ENCODE measurements at regions of chr12 and their contacts with region 1.

Region 1: DNA sequence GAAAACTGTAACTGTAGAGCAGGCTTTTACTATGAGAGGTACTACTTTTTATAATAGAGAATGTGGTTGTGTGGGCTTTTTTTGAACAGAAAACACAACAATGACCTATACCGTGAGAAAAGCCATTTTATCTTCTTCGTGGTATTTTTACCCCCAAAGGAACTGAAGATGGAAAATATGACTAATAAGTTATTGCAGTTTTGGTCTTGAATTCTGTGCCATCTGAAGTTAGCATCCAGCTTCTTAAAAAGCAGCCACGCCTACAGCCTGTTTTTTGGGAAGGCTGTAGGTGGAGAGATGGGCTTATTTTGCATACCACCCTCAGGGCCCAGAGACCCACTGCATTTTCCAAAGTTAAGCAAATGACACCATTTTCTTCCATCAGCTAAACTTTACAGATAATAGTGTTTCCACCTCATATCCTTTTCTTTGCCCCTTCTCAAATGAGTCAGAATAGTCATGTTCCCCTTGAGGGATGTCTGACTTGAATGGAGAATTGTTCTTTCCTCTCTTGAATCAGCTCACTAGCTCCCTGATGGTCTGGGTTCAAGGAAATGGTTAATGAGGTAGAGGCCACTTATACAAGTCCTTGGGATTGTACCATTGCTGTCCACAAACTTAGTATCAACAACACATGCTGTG is 53.0 kb downstream of the TBC1D30 start:
- DNase-seq: no peak
- ATAC-seq: no peak
- H3K4me3 ChIP-seq: no peak overlapping the region
- H3K27ac ChIP-seq: no peak overlapping the region
- H3K4me1 ChIP-seq: peaks cover 16% of the 10 kb centered on the region; the same call in 1 of the 2 replicates
- H3K27me3 ChIP-seq: no peaks in the 10 kb centered on the region
- CTCF ChIP-seq: no peak

Region 2: GRCh38 chr12:64633656-64634337 is 243.7 kb before region 1 on chr12:
- CTCF ChIA-PET with region 1: no interaction called
- POLR2A ChIA-PET with region 1: no interaction called
- intact Hi-C with region 1: no loop called
- DNase-seq: peak; percentile 83
- ATAC-seq: peak; percentile 100
- H3K4me3 ChIP-seq: no peak overlapping the region
- H3K27ac ChIP-seq: peak overlapping the region; percentile 53
- H3K4me1 ChIP-seq: peaks cover 12% of the 10 kb centered on the region
- H3K27me3 ChIP-seq: no peaks in the 10 kb centered on the region
- CTCF ChIP-seq: no peak

Region 3: DNA sequence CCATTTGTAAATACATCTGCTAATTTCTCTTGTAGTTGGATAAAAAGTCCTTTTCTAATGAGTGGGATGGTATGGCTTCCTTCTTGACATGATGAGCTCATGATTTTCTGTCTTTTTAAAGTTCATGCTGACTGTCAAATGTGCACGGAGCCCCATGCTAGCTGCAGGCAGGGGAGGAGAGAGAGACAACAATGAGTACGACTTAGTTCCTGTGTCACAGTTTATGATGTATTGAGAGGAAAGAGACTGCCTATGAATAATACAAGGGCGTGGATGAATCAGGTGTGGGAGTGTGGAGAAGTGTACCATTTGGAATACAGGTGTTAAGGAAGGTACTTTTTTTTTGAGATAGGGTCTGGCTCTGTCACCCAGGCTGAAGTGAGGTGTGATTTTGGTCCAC is 63.8 kb before region 1 on chr12:
- CTCF ChIA-PET with region 1: interaction called, 4 read pairs
- POLR2A ChIA-PET with region 1: no interaction called
- intact Hi-C with region 1: loop called (anchors 2 kb)
- DNase-seq: peak; percentile 72
- ATAC-seq: peak; percentile 77
- H3K4me3 ChIP-seq: no peak overlapping the region
- H3K27ac ChIP-seq: peak overlapping the region; percentile 46
- H3K4me1 ChIP-seq: peaks cover 36% of the 10 kb centered on the region
- H3K27me3 ChIP-seq: no peaks in the 10 kb centered on the region
- CTCF ChIP-seq: no peak

Region 4: DNA sequence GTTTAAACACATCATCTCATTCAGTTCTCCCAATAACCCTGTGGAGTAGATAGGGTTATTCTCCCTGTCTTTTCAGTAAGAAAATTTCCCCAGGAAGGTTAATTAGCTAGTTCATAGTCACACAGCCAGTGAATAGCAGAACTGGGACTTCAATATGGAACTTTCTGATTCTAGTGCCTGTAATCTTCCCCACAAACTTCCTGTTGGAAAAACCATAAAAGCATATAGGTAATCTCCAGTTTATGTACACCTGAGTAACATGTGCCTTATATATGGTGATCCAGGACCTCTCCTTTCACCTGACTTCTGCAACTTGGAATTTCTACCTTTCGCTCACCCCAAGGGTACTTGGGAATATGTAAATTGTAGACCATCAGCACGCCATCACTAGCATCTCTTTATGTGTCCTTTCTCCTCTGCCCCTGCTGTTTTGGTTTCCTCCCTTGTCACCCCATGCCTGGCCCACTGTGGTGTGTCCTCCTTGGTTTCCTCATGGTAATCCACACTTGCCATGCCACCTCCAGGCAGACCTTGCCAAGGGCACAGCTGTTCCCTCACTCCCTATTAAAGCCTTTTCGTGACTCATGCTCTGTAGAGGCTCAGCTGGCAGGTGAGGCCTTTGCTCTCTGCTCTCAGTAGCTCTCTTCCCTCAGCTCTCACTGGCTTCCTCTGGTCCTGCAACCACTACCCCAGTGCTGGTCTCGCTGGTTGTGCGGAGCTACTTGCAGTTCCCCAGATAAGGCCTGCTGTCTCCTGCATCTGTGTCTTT is 36.4 kb before region 1 on chr12:
- CTCF ChIA-PET with region 1: no interaction called
- POLR2A ChIA-PET with region 1: no interaction called
- intact Hi-C with region 1: loop called (anchors 1 kb)
- DNase-seq: peak; percentile 19
- ATAC-seq: peak; percentile 37; the same call in 1 of the 2 replicates
- H3K4me3 ChIP-seq: no peak overlapping the region
- H3K27ac ChIP-seq: no peak overlapping the region
- H3K4me1 ChIP-seq: no peaks in the 10 kb centered on the region; the same call in 1 of the 2 replicates
- H3K27me3 ChIP-seq: no peaks in the 10 kb centered on the region
- CTCF ChIP-seq: no peak

Measured in PC-3 (cell line).